ENCODE measurements at regions of chr1 and their contacts with region 1.

Region 1: DNA sequence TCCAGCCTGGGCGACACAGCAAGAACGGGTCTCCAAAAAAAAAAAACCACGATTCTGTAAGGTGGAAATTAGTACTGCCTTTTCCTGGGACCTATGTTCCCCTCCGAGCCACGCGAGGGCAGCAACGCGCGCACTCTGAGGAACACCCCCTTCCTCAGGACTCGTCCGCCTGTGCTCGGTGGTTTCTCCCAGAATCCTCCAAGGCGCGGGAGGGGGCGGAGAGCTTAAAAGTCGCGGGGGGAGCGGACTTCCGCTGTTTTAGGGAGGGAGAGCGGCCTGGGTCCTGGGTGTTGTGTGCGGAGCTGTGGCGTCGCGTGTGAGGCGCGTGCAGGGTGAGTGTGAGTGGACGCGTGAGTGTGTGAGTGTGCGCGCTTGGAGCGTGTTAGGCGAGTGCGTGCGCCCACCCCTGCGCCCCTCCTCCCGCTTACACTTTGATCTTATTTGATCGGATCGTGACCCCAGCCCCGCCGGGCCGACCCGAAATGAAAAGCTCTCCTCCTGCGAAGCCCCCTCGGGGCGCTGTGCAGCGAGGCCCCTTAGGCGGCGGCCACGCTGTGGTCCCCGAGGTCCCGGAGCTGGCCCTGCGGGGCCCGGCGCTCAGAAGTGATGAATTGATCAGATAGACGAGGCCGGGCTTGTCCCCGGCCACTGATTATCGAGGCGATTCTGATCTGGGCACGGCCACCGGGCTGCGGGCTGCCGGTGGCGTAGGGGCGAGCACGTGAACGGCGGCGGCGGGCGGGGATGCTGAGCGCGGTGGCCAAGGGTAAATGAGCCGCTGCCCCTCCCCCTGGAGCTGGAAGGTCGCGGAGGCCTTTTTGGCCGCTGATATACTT is 9.6 kb downstream of the TMEM167B start:
- DNase-seq: peak; percentile 97
- ATAC-seq: peak; percentile 98
- H3K4me3 ChIP-seq: peak overlapping the region; percentile 77
- H3K27ac ChIP-seq: peak overlapping the region; percentile 89
- H3K4me1 ChIP-seq: no peaks in the 10 kb centered on the region
- H3K27me3 ChIP-seq: no peaks in the 10 kb centered on the region
- CTCF ChIP-seq: peak; percentile 91
- POLR2A ChIP-seq: peak; percentile 99
- RAD21 ChIP-seq: peak; percentile 58

Region 2: GRCh38 chr1:108746372-108747205 is 353.6 kb before region 1 on chr1 and contains the start of gene STXBP3:
- CTCF ChIA-PET with region 1: no interaction called
- POLR2A ChIA-PET with region 1: no interaction called
- dilution Hi-C with region 1: no loop called
- in situ Hi-C with region 1: no loop called
- intact Hi-C with region 1: no loop called
- DNase-seq: peak; percentile 98
- ATAC-seq: peak; percentile 95
- H3K4me3 ChIP-seq: peak within 1 kb of the TSS; percentile 76
- H3K27ac ChIP-seq: peak within 1 kb of the TSS; percentile 86
- H3K4me1 ChIP-seq: no peaks in the 10 kb centered on the region
- H3K27me3 ChIP-seq: peaks cover 4% of the 10 kb centered on the region; the same call in 1 of the 2 replicates
- CTCF ChIP-seq: peak; percentile 95
- POLR2A ChIP-seq: peak; percentile 92
- RAD21 ChIP-seq: peak; percentile 49
- total RNA-seq, gene STXBP3: 19.7 and 38.3 TPM in 2 replicates

Region 3: GRCh38 chr1:109075531-109076490 is 24.3 kb before region 1 on chr1 and contains the start of gene TAF13:
- CTCF ChIA-PET with region 1: interaction called, 3 read pairs
- POLR2A ChIA-PET with region 1: no interaction called
- dilution Hi-C with region 1: no loop called
- in situ Hi-C with region 1: no loop called
- intact Hi-C with region 1: loop called (anchors 1 kb)
- DNase-seq: peak; percentile 96
- ATAC-seq: peak; percentile 99
- H3K4me3 ChIP-seq: peak within 1 kb of the TSS; percentile 85
- H3K27ac ChIP-seq: peak within 1 kb of the TSS; percentile 99
- H3K4me1 ChIP-seq: no peaks in the 10 kb centered on the region
- H3K27me3 ChIP-seq: no peaks in the 10 kb centered on the region
- CTCF ChIP-seq: peak; percentile 43
- POLR2A ChIP-seq: peak; percentile 100
- RAD21 ChIP-seq: peak; percentile 11; the same call in 1 of the 2 replicates
- total RNA-seq, gene TAF13: 13.1 and 81.4 TPM in 2 replicates

Region 4: DNA sequence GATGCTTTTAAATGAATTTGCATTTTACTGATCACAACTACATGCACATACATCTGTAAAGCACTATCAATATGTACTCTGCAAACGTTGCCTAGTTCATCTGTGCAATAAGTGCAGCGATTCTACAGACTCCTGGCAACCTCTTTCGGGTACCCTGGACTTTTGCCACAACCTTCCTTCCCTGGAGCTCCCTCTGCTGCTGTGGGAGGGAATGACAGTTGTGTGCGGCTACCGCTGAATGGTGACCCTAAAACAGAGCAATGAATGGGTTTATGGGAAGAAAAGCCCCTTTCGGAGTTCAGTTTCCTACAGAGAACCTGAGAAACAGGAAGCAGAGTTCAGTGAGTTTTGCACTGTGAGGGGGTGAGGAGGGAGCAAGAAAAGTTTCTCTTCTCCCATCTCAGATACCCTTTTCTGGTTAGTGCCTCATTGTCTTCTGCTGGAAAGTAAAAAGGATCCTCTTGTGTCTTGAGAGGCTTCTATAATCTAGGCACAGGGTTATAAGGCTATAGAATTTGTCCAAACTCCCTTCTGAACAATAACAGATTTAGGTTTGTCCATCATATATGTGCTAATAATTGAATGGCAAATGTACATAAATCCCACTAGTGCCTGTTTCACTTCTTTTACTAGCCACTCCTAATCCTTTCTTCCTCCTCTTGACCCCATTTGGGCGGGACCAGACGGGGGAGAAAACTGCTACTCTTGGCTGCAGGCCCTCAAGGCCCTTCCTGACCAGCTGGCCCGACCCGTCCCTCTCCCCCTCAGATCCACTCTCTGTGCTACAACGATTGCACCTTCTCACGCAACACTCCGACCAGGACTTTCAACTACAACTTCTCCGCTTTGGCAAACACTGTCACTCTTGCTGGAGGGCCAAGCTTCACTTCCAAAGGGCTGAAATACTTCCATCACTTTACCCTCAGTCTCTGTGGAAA is 93.8 kb after region 1 on chr1:
- CTCF ChIA-PET with region 1: interaction called, 3 read pairs
- POLR2A ChIA-PET with region 1: no interaction called
- dilution Hi-C with region 1: no loop called
- in situ Hi-C with region 1: no loop called
- intact Hi-C with region 1: loop called (anchors 5 kb)
- DNase-seq: no peak
- ATAC-seq: no peak
- H3K4me3 ChIP-seq: no peak overlapping the region
- H3K27ac ChIP-seq: no peak overlapping the region
- H3K4me1 ChIP-seq: peaks cover 20% of the 10 kb centered on the region
- H3K27me3 ChIP-seq: no peaks in the 10 kb centered on the region
- CTCF ChIP-seq: peak; percentile 46
- POLR2A ChIP-seq: no peak
- RAD21 ChIP-seq: peak; percentile 47